Caco-2 (cell line): ENCODE measurements at regions of chr1 and their contacts with region 1.

Region 1: DNA sequence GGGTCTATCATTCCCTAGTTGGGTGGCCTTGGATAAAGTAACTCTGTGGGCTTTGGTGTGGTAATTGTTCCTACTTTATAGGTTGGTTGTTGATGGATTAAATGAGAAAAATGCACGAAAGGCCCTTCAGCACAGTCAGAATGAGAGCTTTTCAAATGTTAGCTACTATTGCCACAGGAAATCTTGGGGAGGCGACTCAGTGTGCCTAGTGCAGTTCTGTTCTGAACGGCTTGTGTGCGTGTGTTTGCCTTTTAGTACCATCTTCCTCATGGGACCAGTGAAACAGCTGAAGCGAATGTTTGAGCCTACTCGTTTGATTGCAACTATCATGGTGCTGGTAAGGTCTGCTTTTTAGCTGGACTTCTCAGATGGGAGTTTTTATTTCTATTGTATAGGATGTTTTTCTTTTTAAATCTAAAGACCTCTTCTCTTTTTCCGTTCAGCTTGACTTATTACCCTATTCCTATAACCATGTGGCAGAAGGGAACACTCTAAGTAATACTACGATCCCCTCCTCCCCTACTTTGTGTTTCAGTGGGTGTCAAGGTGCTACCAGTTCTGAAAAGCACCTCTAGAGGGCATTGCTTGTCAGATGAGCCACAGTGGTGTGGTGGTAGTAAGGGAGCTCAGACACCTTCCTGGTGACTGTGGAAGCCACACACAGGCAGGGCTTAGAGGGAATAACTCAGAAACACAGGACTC is 9.2 kb downstream of the SFT2D2 start:
- DNase-seq: peak; percentile 59 to 67
- H3K4me3 ChIP-seq: no peak overlapping the region
- H3K4me3 Mint-ChIP-seq: no peak overlapping the region
- H3K27ac Mint-ChIP-seq: peak overlapping the region; percentile 44
- H3K4me1 ChIP-seq: peaks cover 36% of the 10 kb centered on the region
- H3K4me1 Mint-ChIP-seq: peaks cover 38% of the 10 kb centered on the region
- H3K27me3 ChIP-seq: no peaks in the 10 kb centered on the region
- H3K27me3 Mint-ChIP-seq: no peaks in the 10 kb centered on the region
- CTCF ChIP-seq: peak; percentile 58 to 65

Region 2: DNA sequence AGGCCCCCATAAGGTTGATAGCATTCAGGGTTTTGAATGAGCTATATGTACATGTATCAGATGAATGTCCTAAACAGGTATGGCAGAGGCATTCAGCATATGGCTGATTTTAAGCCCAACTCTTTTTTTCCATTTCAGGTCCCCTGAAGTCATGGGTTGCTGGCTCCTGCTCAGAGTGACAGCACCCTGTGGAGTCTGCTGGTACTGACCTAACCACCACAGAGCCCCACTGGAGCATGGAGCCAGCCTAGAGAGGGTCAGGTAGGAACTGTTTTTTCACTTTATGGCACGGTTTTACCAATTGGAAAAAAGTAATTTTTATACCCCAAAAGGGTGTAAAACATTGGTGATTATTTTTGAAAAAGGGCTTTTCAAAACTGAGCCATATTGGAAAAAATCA is 215.6 kb before region 1 on chr1:
- CTCF ChIA-PET with region 1: no interaction called
- POLR2A ChIA-PET with region 1: no interaction called
- intact Hi-C with region 1: no loop called
- DNase-seq: no peak
- H3K4me3 ChIP-seq: no peak overlapping the region
- H3K4me3 Mint-ChIP-seq: no peak overlapping the region
- H3K27ac Mint-ChIP-seq: no peak overlapping the region
- H3K4me1 ChIP-seq: no peaks in the 10 kb centered on the region
- H3K4me1 Mint-ChIP-seq: peaks cover 5% of the 10 kb centered on the region
- H3K27me3 ChIP-seq: no peaks in the 10 kb centered on the region
- H3K27me3 Mint-ChIP-seq: no peaks in the 10 kb centered on the region
- CTCF ChIP-seq: no peak

Region 3: GRCh38 chr1:168216171-168216570 is 18.8 kb before region 1 on chr1:
- CTCF ChIA-PET with region 1: no interaction called
- POLR2A ChIA-PET with region 1: no interaction called
- intact Hi-C with region 1: no loop called
- DNase-seq: no peak
- H3K4me3 ChIP-seq: no peak overlapping the region
- H3K4me3 Mint-ChIP-seq: no peak overlapping the region
- H3K27ac Mint-ChIP-seq: no peak overlapping the region
- H3K4me1 ChIP-seq: no peaks in the 10 kb centered on the region
- H3K4me1 Mint-ChIP-seq: no peaks in the 10 kb centered on the region
- H3K27me3 ChIP-seq: no peaks in the 10 kb centered on the region
- H3K27me3 Mint-ChIP-seq: no peaks in the 10 kb centered on the region
- CTCF ChIP-seq: no peak

Region 4: DNA sequence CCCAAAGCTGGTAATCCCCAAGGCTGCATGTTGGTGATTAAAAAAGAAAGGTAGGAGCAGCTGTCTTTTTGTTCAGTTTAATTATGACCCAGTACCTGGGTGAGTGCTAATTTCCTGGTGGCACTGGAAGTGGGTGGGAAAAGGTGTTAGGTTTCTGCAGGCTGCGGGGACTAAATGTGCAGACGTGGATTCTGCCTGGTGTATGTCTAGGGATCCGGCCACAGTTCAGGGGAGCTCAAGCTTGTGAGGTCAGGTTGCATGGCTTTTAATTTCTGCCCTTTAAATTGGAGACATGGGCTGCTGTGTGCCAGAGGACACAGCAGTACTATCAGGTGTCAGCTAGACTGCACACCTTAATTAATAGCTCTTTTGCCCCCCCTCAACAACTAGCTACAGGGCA is 25.4 kb after region 1 on chr1:
- CTCF ChIA-PET with region 1: interaction called, 4 read pairs
- POLR2A ChIA-PET with region 1: no interaction called
- intact Hi-C with region 1: loop called (anchors 2 kb)
- DNase-seq: no peak
- H3K4me3 ChIP-seq: no peak overlapping the region
- H3K4me3 Mint-ChIP-seq: no peak overlapping the region
- H3K27ac Mint-ChIP-seq: no peak overlapping the region
- H3K4me1 ChIP-seq: no peaks in the 10 kb centered on the region
- H3K4me1 Mint-ChIP-seq: no peaks in the 10 kb centered on the region
- H3K27me3 ChIP-seq: no peaks in the 10 kb centered on the region
- H3K27me3 Mint-ChIP-seq: no peaks in the 10 kb centered on the region
- CTCF ChIP-seq: no peak

Region 5: DNA sequence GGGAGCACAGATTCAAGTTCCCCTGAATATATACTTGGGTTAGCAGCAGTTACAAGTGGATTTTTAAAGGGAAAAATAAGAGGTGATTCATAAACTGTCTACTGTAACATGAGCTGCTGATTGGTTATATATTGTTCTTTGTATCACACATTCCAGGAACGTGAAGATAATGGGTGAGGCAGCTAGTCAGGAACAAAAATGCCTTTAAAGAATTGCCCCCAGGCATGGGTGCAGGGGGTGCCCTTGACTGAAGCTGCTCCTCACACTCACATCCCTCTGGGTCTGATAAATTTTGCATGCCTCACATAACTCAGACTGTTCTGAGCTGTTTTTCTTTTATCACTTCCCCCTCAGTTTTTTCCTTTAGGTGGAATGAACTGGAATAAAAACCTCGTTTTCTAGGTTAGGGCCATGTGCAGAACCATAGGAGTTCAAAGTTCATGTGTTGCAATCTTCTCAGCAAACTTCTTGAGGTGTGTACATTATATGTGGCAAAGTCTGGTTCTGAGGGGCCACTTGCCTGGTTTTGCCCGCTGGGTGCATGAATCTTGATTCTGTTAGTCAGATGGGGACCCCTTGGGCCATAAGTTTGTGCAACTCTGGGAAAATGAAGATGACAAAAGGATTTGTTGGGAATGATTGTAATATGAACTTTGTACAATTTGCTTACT is 66.8 kb after region 1 on chr1:
- CTCF ChIA-PET with region 1: interaction called, 12 read pairs
- POLR2A ChIA-PET with region 1: no interaction called
- intact Hi-C with region 1: loop called (anchors 1 kb)
- DNase-seq: peak; percentile 89 to 92
- H3K4me3 ChIP-seq: no peak overlapping the region
- H3K4me3 Mint-ChIP-seq: peak overlapping the region; percentile 36
- H3K27ac Mint-ChIP-seq: peak overlapping the region; percentile 65
- H3K4me1 ChIP-seq: peaks cover 48% of the 10 kb centered on the region
- H3K4me1 Mint-ChIP-seq: peaks cover 26% of the 10 kb centered on the region
- H3K27me3 ChIP-seq: no peaks in the 10 kb centered on the region; the same call in 1 of the 2 replicates
- H3K27me3 Mint-ChIP-seq: no peaks in the 10 kb centered on the region
- CTCF ChIP-seq: no peak

Region 6: DNA sequence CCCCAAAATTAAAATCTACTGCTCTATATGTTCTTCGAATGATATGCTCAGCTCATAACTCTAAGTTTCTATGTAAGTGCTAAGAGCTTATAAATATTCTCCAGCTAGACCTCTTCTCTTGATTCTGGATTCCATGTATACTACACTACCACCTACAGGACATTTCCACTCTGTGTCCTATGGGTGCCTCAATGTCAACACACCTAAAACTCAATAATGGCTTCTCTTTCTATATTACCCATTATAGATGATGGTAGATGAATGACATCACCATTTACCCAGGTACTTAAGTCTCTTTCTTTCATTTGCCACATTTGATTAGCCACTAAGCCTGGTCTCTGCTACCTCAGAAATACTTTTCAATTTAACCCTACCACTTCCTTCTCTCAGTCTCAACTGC is 86.9 kb after region 1 on chr1:
- CTCF ChIA-PET with region 1: interaction called, 48 read pairs
- POLR2A ChIA-PET with region 1: interaction called, 5 read pairs
- intact Hi-C with region 1: loop called (anchors 1 kb)
- DNase-seq: peak in 1 of 2 experiments; percentile 31
- H3K4me3 ChIP-seq: no peak overlapping the region
- H3K4me3 Mint-ChIP-seq: no peak overlapping the region
- H3K27ac Mint-ChIP-seq: no peak overlapping the region
- H3K4me1 ChIP-seq: 0 out of 2 replicates have a peak, but pooled peaks cover 4% of the 10 kb centered on the region
- H3K4me1 Mint-ChIP-seq: no peaks in the 10 kb centered on the region
- H3K27me3 ChIP-seq: no peaks in the 10 kb centered on the region
- H3K27me3 Mint-ChIP-seq: no peaks in the 10 kb centered on the region
- CTCF ChIP-seq: peak; percentile 28 to 63